ENCODE measurements at regions of chr5 and their contacts with region 1.

Region 1: GRCh38 chr5:109688971-109689739 is 572 bp upstream of the MAN2A1 start:
- DNase-seq: peak; percentile 92
- H3K4me3 ChIP-seq: peak overlapping the region; percentile 79 to 87 (median 83)
- H3K27ac ChIP-seq: peak overlapping the region; percentile 81
- H3K4me1 ChIP-seq: peaks cover 8% of the 10 kb centered on the region
- H3K27me3 ChIP-seq: no peaks in the 10 kb centered on the region
- CTCF ChIP-seq: no peak
- POLR2A ChIP-seq: peak; percentile 82

Region 2: DNA sequence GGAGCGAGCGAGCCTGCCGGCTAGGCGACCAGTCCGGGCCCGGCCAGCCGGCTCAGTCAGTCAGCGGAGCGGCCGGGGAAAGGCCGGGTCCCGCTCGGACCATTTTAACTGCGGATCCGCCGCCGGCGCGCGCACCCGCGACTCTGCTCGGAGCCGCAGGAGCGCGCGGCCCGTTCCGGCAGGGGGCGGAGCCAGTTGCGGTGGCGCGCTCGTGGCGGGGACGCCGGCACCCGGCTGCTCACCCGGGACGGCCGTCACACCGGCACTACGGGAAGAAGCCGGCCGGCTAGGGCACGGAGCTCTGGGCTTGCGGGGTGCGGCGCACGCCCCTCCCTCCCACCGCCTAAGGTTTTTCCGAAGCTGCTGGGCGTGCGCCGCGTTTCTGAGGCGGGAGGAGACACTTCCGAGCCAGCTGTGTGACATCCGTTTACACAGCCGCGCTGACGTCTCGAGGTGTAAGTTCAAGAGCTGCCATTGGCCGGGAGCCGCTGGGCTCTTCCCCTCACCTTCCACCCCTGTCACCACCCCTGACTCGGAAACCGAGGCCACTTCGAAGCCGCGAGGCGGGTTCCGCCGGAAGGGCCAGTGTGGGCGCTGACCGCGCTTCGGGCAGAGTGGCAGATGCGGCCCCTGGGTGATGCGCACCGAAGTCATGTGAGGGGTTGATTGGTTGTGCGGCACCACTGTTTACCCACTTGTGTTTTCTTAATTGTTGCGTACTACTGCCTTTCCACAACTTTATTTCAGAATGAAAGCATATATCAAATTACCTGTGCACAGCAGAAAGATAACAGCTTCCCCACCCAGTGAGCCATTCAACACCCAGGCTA is 1307.0 kb before region 1 on chr5 and contains the start of gene FBXL17:
- CTCF ChIA-PET with region 1: no interaction called
- POLR2A ChIA-PET with region 1: no interaction called
- dilution Hi-C with region 1: no loop called
- intact Hi-C with region 1: loop called (anchors 5 kb)
- DNase-seq: peak; percentile 81
- H3K4me3 ChIP-seq: peak within 1 kb of the TSS; percentile 45 to 99 (median 64)
- H3K27ac ChIP-seq: peak within 1 kb of the TSS; percentile 90
- H3K4me1 ChIP-seq: peaks cover 17% of the 10 kb centered on the region
- H3K27me3 ChIP-seq: no peaks in the 10 kb centered on the region
- CTCF ChIP-seq: no peak
- POLR2A ChIP-seq: peak; percentile 66
- total RNA-seq, gene FBXL17: 8.8 and 13.9 TPM in 2 replicates

Region 3: DNA sequence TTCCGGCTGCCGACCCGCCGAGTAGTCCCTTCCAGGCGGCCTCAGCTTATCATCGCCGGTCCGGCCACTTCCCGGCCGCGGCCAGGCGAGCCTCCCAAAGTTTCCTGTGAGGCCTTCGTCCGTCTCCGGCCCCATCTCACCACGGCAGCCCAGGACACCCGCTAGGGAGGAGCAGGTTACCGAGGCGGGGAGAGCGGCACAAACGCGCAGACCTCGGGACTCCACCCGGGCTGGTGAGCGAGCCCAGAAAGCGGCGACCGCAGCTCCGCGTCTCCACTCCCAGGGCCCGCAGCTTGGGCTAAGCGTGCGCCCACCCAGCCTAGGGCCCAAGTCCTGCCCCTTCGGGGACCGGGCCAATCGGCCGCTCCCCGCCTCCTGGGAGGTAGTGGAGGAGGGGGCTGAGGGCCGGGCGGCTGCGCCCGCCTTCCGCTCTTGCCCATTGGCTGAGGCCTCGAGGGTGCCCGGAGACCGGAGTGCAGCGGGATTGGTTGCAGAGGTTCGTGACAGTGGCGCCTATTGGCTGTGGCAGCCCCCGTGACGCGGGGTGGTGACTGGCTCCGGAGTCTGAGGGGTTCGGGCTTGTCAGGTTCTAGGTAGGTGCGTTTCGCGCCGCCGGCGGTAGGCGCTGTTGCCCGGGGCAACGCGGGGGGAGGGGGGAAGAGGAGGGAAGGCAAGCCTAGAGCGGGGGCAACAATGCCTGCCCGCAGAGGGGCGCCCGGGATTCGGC is 940.6 kb before region 1 on chr5:
- CTCF ChIA-PET with region 1: no interaction called
- POLR2A ChIA-PET with region 1: no interaction called
- dilution Hi-C with region 1: no loop called
- intact Hi-C with region 1: loop called (anchors 5 kb)
- DNase-seq: peak; percentile 99
- H3K4me3 ChIP-seq: peak overlapping the region; percentile 81 to 98 (median 94)
- H3K27ac ChIP-seq: peak overlapping the region; percentile 98
- H3K4me1 ChIP-seq: peaks cover 14% of the 10 kb centered on the region
- H3K27me3 ChIP-seq: no peaks in the 10 kb centered on the region
- CTCF ChIP-seq: no peak
- POLR2A ChIP-seq: peak; percentile 98

Region 4: GRCh38 chr5:109479260-109479860 is 209.8 kb before region 1 on chr5:
- CTCF ChIA-PET with region 1: no interaction called
- POLR2A ChIA-PET with region 1: no interaction called
- dilution Hi-C with region 1: no loop called
- intact Hi-C with region 1: loop called (anchors 5 kb)
- DNase-seq: peak; percentile 40
- H3K4me3 ChIP-seq: no peak overlapping the region
- H3K27ac ChIP-seq: no peak overlapping the region
- H3K4me1 ChIP-seq: no peaks in the 10 kb centered on the region
- H3K27me3 ChIP-seq: no peaks in the 10 kb centered on the region
- CTCF ChIP-seq: peak; percentile 23 to 25
- POLR2A ChIP-seq: no peak

Region 5: GRCh38 chr5:109558952-109559351 is 130.2 kb before region 1 on chr5:
- CTCF ChIA-PET with region 1: no interaction called
- POLR2A ChIA-PET with region 1: no interaction called
- dilution Hi-C with region 1: no loop called
- intact Hi-C with region 1: no loop called
- DNase-seq: no peak
- H3K4me3 ChIP-seq: no peak overlapping the region
- H3K27ac ChIP-seq: no peak overlapping the region
- H3K4me1 ChIP-seq: no peaks in the 10 kb centered on the region
- H3K27me3 ChIP-seq: peaks cover 0 to 1% of the 10 kb centered on the region in 2 experiments
- CTCF ChIP-seq: no peak
- POLR2A ChIP-seq: no peak

Region 6: GRCh38 chr5:109668668-109669422 is 20.3 kb before region 1 on chr5:
- CTCF ChIA-PET with region 1: interaction called, 8 read pairs
- POLR2A ChIA-PET with region 1: no interaction called
- dilution Hi-C with region 1: no loop called
- intact Hi-C with region 1: loop called (anchors 1 kb)
- DNase-seq: peak; percentile 6
- H3K4me3 ChIP-seq: no peak overlapping the region
- H3K27ac ChIP-seq: peak overlapping the region; percentile 9
- H3K4me1 ChIP-seq: peaks cover 17% of the 10 kb centered on the region
- H3K27me3 ChIP-seq: no peaks in the 10 kb centered on the region
- CTCF ChIP-seq: no peak
- POLR2A ChIP-seq: no peak

Region 7: GRCh38 chr5:109844148-109844547 is 155.0 kb after region 1 on chr5:
- CTCF ChIA-PET with region 1: interaction called, 9 read pairs
- POLR2A ChIA-PET with region 1: no interaction called
- dilution Hi-C with region 1: no loop called
- intact Hi-C with region 1: loop called (anchors 1 kb)
- DNase-seq: no peak
- H3K4me3 ChIP-seq: no peak overlapping the region
- H3K27ac ChIP-seq: no peak overlapping the region
- H3K4me1 ChIP-seq: peaks cover 2% of the 10 kb centered on the region
- H3K27me3 ChIP-seq: no peaks in the 10 kb centered on the region
- CTCF ChIP-seq: peak in 1 of 2 donors; percentile 16
- POLR2A ChIP-seq: no peak

Region 8: GRCh38 chr5:110625376-110625999 is 936.3 kb after region 1 on chr5:
- CTCF ChIA-PET with region 1: interaction called, 52 read pairs
- POLR2A ChIA-PET with region 1: no interaction called
- dilution Hi-C with region 1: no loop called
- intact Hi-C with region 1: loop called (anchors 1 kb)
- DNase-seq: peak; percentile 33
- H3K4me3 ChIP-seq: no peak overlapping the region
- H3K27ac ChIP-seq: no peak overlapping the region
- H3K4me1 ChIP-seq: no peaks in the 10 kb centered on the region
- H3K27me3 ChIP-seq: no peaks in the 10 kb centered on the region
- CTCF ChIP-seq: peak in 1 of 2 donors; percentile 12
- POLR2A ChIP-seq: no peak